ENCODE measurements at regions of chr19 and their contacts with region 1.

Region 1: DNA sequence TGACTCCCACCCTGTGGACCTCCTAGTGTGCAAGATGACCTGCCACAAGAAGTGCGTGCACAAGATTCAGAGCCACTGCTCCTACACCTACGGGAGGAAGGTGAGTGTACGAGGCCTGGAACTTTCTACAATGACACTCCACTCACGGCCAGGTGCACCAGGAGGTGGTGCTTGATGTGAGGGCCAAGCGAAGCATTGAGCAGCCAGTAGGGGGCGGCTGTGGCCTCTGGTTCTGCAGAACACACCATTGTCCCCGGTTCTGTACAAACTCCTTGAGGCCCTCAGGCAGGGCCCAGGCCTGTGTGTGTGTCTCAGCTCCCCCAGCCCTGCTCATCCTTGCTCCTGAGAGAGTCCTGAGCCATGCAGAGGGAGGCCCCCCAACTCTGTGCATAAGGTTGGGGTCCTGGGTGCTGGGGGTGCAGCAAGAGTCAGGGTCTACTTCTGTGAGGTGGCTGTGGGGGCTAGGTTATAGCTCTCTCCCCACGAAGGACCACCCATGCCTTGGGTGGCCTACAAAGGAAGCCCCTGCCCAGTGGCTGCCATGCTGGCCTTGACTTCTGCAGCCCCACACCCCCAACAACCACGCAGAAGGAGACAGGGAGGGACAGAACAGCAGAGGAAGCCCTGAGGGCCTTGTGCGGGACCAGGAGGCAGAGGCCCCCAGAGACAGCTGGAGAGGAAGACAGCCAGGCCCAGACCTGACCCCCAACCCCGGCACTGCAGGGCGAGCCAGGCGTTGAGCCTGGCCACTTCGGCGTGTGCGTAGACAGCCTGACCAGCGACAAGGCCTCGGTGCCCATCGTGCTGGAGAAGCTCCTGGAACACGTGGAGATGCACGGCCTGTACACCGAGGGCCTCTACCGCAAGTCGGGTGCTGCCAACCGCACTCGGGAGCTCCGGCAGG is 9.7 kb upstream of the USE1 start:
- DNase-seq: peak; percentile 41 to 68 (median 54)
- ATAC-seq: peak; percentile 82
- H3K4me3 ChIP-seq: no peak overlapping the region
- H3K4me3 Mint-ChIP-seq: no peak overlapping the region
- H3K27ac ChIP-seq: no peak overlapping the region
- H3K27ac Mint-ChIP-seq: peak overlapping the region in 1 of 9 donors; percentile 38
- H3K4me1 ChIP-seq: no peaks in the 10 kb centered on the region
- H3K4me1 Mint-ChIP-seq: peaks cover 0 to 16% (median 0%) of the 10 kb centered on the region in 7 donors
- H3K27me3 ChIP-seq: no peaks in the 10 kb centered on the region
- H3K27me3 Mint-ChIP-seq: no peaks in the 10 kb centered on the region

Region 2: GRCh38 chr19:17125715-17126677 is 79.5 kb before region 1 on chr19:
- CTCF ChIA-PET with region 1: no interaction called
- POLR2A ChIA-PET with region 1: no interaction called
- intact Hi-C with region 1: no loop called
- DNase-seq: peak; percentile 58 to 87 (median 83)
- ATAC-seq: peak; percentile 91
- H3K4me3 ChIP-seq: peak overlapping the region; percentile 71
- H3K4me3 Mint-ChIP-seq: peak overlapping the region; percentile 81 to 95 (median 86)
- H3K27ac ChIP-seq: peak overlapping the region; percentile 95
- H3K27ac Mint-ChIP-seq: peak overlapping the region; percentile 90 to 100 (median 99)
- H3K4me1 ChIP-seq: peaks cover 33 to 41% of the 10 kb centered on the region in 2 donors
- H3K4me1 Mint-ChIP-seq: peaks cover 18 to 71% (median 50%) of the 10 kb centered on the region in 7 donors
- H3K27me3 ChIP-seq: no peaks in the 10 kb centered on the region
- H3K27me3 Mint-ChIP-seq: no peaks in the 10 kb centered on the region

Region 3: DNA sequence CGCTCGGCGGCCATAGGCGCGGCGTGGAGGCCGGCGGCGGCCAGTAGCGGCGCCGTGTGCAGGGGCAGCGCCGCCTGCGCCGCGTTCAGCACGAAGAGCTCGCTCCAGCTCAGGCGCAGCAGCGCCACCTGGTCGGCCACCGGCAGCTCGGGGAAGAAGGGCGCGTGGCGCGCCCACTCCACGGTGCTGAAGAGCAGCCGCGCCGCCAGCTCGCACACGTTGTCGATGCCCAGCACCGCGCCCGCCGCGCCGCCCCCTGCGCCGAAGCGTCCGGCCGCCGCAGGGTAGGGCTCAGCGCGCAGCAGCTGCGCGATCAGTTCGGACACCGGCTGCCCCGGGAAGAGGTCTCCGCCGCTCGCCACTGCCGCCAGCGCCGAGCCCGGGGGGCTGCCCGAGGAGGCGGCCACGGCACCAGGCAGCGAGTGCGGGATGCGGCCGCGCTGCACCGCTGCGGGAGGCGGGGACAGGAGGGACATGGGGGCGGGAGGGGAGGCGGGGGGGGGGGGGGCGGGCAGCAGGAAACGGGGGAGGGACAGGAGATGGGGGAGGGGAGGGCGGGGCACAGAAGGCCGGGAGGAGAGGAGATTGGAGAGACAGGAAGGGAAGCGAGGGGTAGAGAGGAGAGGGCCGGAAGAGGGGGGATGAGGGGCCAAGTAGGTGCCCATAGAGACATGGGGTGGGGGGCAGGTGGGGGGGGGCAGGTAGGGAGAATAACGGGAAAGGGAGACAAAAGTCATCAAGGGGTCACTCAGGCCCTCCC is 30.3 kb after region 1 on chr19:
- CTCF ChIA-PET with region 1: interaction called, 13 read pairs
- POLR2A ChIA-PET with region 1: interaction called, 3 read pairs
- intact Hi-C with region 1: loop called in 1 of 2 experiments (anchors 1 kb)
- DNase-seq: peak; percentile 62 to 75 (median 73)
- ATAC-seq: peak; percentile 95
- H3K4me3 ChIP-seq: peak overlapping the region; percentile 74
- H3K4me3 Mint-ChIP-seq: peak overlapping the region in 9 of 10 donors; percentile 49 to 88 (median 83)
- H3K27ac ChIP-seq: peak overlapping the region; percentile 64
- H3K27ac Mint-ChIP-seq: peak overlapping the region in 1 of 9 donors; percentile 23
- H3K4me1 ChIP-seq: peaks cover 0 to 11% of the 10 kb centered on the region in 2 donors
- H3K4me1 Mint-ChIP-seq: peaks cover 4 to 22% (median 16%) of the 10 kb centered on the region in 7 donors
- H3K27me3 ChIP-seq: no peaks in the 10 kb centered on the region
- H3K27me3 Mint-ChIP-seq: no peaks in the 10 kb centered on the region

Region 4: DNA sequence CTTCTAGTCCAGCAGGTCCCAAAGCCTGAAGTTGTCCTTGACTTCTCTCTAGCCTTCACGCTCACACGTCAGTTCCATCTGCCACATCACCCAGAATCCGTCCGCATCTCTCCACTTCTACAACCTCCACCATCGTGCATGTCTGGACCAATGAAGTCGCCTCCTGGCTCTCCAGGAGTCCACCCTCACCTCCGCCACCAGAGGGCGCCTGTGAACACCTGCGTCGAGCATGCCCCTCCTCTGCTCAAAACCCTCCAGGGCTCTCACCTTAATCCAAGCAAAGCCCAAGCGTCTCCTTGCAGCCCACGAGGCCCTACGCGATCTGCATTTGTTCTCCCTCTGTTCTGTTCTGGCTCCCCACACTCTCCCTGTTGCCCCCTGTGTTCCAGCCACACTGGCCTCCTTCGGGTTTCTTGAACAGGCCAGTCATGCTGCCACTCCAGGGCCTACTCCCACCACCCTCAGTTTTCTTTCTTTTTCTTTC is 55.4 kb after region 1 on chr19:
- CTCF ChIA-PET with region 1: interaction called, 6 read pairs
- POLR2A ChIA-PET with region 1: no interaction called
- intact Hi-C with region 1: loop called in 1 of 2 experiments (anchors 1 kb)
- DNase-seq: peak; percentile 76 to 90 (median 86)
- ATAC-seq: peak; percentile 100
- H3K4me3 ChIP-seq: no peak overlapping the region
- H3K4me3 Mint-ChIP-seq: no peak overlapping the region
- H3K27ac ChIP-seq: no peak overlapping the region
- H3K27ac Mint-ChIP-seq: peak overlapping the region in 3 of 9 donors; percentile 2 to 82 (median 24)
- H3K4me1 ChIP-seq: peaks cover 0 to 10% of the 10 kb centered on the region in 2 donors
- H3K4me1 Mint-ChIP-seq: peaks cover 5 to 14% (median 13%) of the 10 kb centered on the region in 7 donors
- H3K27me3 ChIP-seq: no peaks in the 10 kb centered on the region
- H3K27me3 Mint-ChIP-seq: no peaks in the 10 kb centered on the region

Measured in naive thymus-derived CD4-positive, alpha-beta T cell (primary cell).